T-cell (primary cell): ENCODE measurements at regions of chr6 and their contacts with region 1.

Region 1: DNA sequence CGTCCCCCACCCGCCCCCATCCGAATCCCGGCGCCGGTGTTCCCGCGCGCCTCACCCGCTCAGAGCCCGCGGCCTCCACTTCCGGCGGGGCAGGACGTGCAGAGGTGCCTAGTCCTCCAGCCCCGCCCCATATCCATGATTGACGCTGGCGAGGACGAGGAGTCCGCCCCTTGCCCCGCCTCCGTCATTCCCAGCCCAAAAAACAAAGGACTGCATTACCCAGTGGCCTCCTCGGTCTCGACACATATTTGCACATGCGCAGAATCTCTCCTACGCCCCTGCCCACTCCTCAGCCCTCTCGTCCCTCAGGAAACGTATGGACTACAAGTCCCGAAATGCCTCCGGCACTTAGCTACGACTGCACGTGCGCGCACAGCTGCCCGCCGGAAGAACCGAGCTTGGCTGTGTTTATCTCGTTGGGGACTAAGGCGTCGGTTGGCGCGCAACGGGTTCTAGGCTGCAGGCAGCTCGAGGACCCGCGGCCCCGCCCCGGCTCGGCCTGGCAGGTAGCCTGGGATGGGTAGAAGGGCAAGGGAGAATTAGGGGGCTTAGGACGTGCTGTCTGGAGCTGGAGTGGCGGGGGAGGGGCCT is at the starts of genes KLHDC3 and MEA1:
- DNase-seq: peak; percentile 95 to 99 (median 98)
- ATAC-seq: peak; percentile 89 to 95 (median 93)
- H3K4me3 ChIP-seq: peak within 1 kb of the TSS; percentile 68
- H3K4me3 Mint-ChIP-seq: peak within 1 kb of the TSS; percentile 93 to 95 (median 94)
- H3K27ac ChIP-seq: peak within 1 kb of the TSS; percentile 40
- H3K27ac Mint-ChIP-seq: peak within 1 kb of the TSS; percentile 91
- H3K4me1 ChIP-seq: peaks cover 14 to 46% of the 10 kb centered on the region in 2 experiments
- H3K4me1 Mint-ChIP-seq: peaks cover 58 to 69% (median 62%) of the 10 kb centered on the region in 3 donors
- H3K27me3 ChIP-seq: no peaks in the 10 kb centered on the region
- H3K27me3 Mint-ChIP-seq: no peaks in the 10 kb centered on the region
- total RNA-seq, gene KLHDC3: 40.5 to 75.3 (median 66.9) TPM
- total RNA-seq, gene MEA1: 20.5 to 38.7 (median 34.0) TPM

Region 2: DNA sequence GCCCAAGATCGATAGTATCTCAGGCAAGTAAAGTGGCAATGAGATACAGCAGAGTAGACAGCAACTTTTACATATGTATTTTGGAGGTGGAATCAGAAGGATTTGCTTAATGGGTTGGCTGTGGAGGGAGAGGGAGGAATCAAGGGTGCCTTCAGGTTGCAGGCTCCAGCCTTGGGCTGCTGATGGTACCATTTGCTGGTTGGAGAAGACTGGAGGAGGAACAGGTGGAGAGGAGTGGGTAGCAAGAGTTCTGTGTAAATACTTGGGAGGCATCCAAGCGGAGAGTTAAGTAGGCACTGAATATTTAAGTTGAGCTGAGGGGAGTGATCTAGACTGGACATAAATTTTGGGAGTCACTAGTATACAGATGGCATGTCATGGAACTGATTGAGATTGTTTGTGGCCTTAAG is 226.9 kb before region 1 on chr6:
- CTCF ChIA-PET with region 1: no interaction called
- POLR2A ChIA-PET with region 1: no interaction called
- DNase-seq: no peak
- ATAC-seq: no peak
- H3K4me3 ChIP-seq: peak overlapping the region in 1 of 2 donors; percentile 38
- H3K4me3 Mint-ChIP-seq: no peak overlapping the region
- H3K27ac ChIP-seq: peak overlapping the region; percentile 15
- H3K27ac Mint-ChIP-seq: no peak overlapping the region
- H3K4me1 ChIP-seq: peaks cover 41 to 53% of the 10 kb centered on the region in 2 experiments
- H3K4me1 Mint-ChIP-seq: peaks cover 0 to 28% (median 16%) of the 10 kb centered on the region in 3 donors
- H3K27me3 ChIP-seq: no peaks in the 10 kb centered on the region
- H3K27me3 Mint-ChIP-seq: no peaks in the 10 kb centered on the region

Region 3: DNA sequence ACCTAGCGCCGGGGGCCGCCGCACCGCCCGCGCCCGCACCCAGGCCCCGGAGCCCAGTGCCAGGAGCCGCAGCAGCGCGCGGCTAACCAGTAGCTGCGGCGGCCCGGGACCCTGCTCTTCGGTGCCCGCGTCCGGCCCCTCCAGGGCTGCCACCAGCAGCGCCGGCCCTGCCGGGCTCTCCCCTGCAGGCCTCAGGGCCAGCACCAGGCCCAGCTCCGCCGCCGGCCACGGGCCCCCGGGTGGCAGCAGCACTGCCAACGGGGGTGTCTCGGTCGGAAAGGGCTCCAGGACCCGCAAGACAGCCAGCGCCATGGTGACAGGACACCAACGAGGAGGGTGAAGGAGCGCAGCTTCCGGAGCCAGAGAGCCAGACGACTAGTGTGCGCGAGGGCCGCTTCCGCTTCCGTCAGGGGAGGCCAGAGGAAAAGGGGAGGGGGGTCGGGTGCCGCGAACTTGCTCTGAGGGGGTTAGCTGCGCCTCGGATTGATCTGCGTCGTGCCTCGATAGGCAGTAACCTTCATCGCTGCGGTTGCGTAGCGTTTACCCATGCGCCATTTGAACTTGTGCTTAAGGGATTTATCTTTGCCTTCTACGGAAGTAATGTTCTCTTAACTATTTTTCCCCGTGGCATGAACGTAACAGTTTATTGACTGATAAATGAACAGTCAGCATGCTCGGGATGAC is 35.0 kb before region 1 on chr6 and contains the start of gene PEX6:
- CTCF ChIA-PET with region 1: interaction called in 1 of 2 experiments, 5 read pairs
- POLR2A ChIA-PET with region 1: interaction called, 4 to 15 read pairs
- DNase-seq: peak; percentile 88 to 98 (median 95)
- ATAC-seq: peak; percentile 94 to 96 (median 95)
- H3K4me3 ChIP-seq: peak within 1 kb of the TSS; percentile 72 to 85
- H3K4me3 Mint-ChIP-seq: peak within 1 kb of the TSS; percentile 88 to 93 (median 92)
- H3K27ac ChIP-seq: peak within 1 kb of the TSS; percentile 85
- H3K27ac Mint-ChIP-seq: peak within 1 kb of the TSS; percentile 97 to 99
- H3K4me1 ChIP-seq: peaks cover 23 to 48% of the 10 kb centered on the region in 2 experiments
- H3K4me1 Mint-ChIP-seq: peaks cover 48 to 54% (median 49%) of the 10 kb centered on the region in 3 donors
- H3K27me3 ChIP-seq: no peaks in the 10 kb centered on the region
- H3K27me3 Mint-ChIP-seq: no peaks in the 10 kb centered on the region
- total RNA-seq, gene PEX6: 20.5 to 30.5 (median 27.4) TPM

Region 4: DNA sequence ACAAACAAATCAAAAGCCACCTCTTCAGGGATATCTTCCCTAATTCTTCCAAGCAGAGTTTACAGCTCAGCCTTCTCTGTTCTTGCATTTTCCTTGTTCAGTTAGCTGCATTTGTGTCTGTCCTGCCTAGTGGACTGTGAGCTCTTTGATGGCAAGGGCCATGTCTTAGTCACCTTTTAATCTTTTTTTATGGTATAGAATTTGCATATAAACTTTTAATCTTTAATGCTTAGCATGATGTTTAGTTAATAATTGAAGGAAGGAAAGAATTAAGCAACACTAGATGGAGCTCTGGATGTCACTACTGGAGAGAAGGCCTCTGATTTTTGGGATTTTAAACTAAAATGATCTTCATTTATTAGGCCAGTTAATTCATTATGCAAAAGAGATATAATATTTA is 17.4 kb before region 1 on chr6:
- CTCF ChIA-PET with region 1: no interaction called
- POLR2A ChIA-PET with region 1: interaction called, 3 to 11 read pairs
- DNase-seq: no peak
- ATAC-seq: no peak
- H3K4me3 ChIP-seq: no peak overlapping the region
- H3K4me3 Mint-ChIP-seq: no peak overlapping the region
- H3K27ac ChIP-seq: no peak overlapping the region
- H3K27ac Mint-ChIP-seq: peak overlapping the region in 1 of 2 donors; percentile 41
- H3K4me1 ChIP-seq: no peaks in the 10 kb centered on the region
- H3K4me1 Mint-ChIP-seq: peaks cover 4 to 10% (median 5%) of the 10 kb centered on the region in 3 donors
- H3K27me3 ChIP-seq: no peaks in the 10 kb centered on the region
- H3K27me3 Mint-ChIP-seq: no peaks in the 10 kb centered on the region